GM10248 (cell line): ENCODE measurements at regions of chr14 and their contacts with region 1.

Region 1: DNA sequence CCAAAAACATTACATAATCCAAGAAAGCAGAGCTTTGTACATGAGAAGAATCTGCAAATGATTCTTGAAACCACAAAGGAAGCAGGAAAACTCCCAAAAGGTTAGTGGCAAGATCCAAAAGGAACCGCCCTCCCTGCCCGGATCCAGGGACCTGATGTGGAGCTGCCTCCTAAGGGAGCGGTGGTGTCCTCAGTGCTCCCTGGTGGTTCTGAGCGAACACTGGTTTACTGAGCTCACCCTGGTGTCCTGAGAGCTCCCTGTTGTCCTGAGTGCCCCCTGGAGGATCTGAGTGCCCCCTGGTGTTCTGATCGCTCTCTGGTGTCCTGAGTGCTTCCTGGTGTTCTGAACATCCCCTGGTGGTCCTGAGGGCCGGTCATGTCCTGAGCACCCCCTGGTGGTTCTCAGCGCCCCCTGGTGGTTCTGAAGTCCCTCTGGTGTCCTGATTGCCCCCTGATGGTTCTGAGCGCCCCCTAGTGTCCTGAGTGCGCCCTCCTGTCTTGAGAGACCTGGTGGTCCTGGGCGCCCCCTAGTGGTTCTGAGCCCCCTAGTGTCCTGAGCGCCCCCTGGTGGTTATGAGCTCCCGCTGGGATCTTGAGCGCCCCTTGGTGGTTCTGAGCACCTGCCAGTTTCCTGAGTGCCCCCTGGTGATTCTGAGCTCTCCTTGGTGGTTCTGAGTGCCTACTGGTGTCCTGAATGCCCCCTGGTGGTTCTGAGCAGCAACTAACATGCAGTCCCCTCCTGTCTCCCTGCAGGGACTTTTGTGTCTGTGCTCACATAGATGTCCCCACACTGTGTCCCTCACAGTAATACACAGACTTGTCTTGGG is 891.1 kb downstream of the TMEM121 start:
- DNase-seq: peak; percentile 75
- CTCF ChIP-seq: peak; percentile 100

Region 2: GRCh38 chr14:105602799-105603793 is 814.3 kb before region 1 on chr14:
- CTCF ChIA-PET with region 1: interaction called, 13 read pairs
- POLR2A ChIA-PET with region 1: no interaction called
- DNase-seq: no peak
- CTCF ChIP-seq: no peak

Region 3: DNA sequence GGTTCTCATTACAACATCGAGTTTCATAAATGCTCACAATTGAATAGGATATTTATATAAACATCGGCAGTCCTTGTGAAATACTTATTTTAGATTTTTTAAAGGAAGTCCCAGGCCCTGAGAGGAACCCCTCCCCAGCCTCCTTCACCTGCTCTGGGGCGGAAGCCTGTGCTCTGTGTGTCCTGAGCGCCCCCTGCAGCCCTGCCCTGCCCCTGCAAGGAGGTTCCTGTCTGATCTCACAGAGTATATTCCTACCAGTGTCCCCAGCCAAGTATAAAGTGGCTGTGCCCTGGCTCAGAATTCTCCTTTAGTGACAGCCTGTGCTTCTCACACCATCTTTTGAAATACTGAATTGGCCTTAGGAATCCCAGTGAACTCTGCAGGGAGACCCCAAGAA is 231.6 kb before region 1 on chr14:
- CTCF ChIA-PET with region 1: no interaction called
- POLR2A ChIA-PET with region 1: no interaction called
- DNase-seq: no peak
- CTCF ChIP-seq: peak; percentile 41

Region 4: GRCh38 chr14:106395456-106396050 is 21.9 kb before region 1 on chr14:
- CTCF ChIA-PET with region 1: interaction called, 115 read pairs
- POLR2A ChIA-PET with region 1: no interaction called
- DNase-seq: no peak
- CTCF ChIP-seq: no peak

Region 5: DNA sequence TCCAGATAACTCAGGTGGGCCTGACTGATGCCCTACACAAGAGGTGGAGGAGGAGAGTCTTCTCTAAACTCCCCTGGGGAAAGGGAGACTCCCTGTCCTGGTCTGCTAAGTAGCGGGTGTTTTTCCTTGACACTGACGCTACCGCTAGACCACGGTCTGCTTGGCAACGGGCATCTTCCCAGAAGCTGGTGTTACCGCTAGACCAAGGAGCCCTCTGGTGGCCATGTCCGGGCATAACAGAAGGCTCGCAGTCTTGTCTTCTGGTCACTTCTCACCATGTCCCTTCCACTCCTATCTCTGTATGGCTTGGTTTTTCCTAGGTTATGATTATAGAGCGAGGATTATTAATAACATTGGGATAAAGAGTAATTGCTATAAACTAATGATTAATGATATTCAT is 74.4 kb after region 1 on chr14:
- CTCF ChIA-PET with region 1: interaction called, 37 read pairs
- POLR2A ChIA-PET with region 1: no interaction called
- DNase-seq: no peak
- CTCF ChIP-seq: peak; percentile 28

Region 6: DNA sequence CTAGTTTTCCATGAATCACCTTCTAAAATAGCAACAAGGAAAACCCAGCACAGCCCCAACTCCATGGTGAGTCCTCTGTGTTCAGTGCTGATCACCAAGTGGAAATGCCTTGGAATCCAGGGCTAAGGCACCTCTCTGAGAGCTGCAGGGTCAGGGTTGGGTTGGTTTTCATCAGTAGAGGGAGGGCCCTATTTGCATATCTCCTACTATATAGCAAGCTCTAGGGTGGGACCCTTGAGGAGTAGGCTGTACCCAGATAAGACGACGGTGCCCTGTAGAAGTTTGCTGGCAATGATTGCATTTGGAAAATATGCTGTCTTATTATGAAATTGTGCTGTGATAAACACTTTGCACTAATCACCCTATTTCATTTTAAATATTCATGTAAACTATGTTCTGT is 120.8 kb after region 1 on chr14:
- CTCF ChIA-PET with region 1: interaction called, 174 read pairs
- POLR2A ChIA-PET with region 1: no interaction called
- DNase-seq: no peak
- CTCF ChIP-seq: no peak

Region 7: DNA sequence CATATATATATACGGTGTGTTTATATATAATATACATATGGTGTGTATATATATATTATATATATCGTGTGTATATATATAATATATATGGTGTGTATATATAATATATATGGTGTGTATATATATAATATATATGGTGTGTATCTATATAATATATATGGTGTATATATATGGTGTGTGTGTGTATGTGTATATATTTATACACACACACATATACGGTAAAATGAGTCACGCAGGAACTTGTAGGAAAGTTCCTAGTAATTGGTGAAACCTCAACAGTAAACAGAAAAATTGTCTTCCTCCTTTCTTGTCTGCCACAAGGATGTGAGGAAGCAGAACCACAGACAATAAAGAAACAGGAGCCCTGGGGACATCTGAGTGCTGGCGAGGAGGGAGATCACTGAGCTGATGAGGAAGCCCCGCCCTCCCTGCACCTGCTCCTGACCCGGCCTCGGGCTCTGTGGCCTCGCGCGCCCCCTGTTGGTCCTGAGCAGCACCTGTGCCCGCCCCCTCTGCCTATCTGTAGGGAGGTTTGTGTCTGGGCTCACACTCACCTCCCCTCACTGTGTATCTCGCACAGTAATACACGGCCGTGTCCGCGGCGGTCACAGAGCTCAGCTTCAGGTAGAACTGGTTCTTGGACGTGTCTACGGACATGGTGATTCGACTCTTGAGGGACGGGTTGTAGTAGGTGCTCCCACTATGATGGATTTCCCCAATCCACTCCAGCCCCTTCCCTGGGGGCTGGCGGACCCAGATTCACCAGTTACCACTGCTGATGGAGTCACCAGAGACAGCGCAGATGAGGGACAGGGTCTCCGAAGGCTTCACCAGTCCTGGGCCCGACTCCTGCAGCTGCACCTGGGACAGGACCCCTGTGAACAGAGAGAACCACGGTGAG is 188.4 kb after region 1 on chr14:
- CTCF ChIA-PET with region 1: interaction called, 16 read pairs
- POLR2A ChIA-PET with region 1: no interaction called
- DNase-seq: peak; percentile 74
- CTCF ChIP-seq: peak; percentile 90